ENCODE measurements at regions of chr15 and their contacts with region 1.

Region 1: DNA sequence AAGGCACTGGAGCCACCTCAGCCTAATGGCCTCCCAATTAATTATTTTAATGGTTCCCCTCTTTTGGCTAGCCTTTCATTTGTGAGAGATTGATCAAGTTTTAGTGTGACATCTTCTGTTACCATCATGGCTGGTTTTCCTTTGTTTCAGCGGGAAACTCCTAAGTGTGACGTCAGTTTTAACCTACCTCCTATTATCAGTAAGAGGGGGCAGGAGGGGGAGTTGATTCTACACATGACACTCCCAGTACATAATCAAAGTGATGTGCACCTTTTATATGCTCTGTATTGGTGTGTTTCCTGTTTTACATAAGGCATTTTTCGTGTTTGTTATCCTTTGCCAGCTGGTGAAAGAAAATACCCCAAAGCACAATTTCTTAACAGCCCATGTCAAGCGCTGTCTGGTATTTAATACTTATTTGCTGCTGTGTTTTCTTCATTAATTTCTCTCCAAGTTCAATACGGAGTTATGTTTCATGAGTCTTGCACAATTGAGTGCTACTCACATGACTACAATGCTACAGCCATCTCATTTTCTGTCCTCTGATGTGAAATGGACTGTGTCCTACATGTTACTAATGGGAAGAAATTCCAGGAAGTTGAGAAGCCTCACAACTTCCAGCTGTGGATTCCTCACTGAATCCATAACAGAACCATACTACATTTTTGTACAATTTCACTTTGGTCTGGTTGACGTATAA is 52.2 kb upstream of the POLR2M start:
- DNase-seq: no peak
- H3K4me3 ChIP-seq: no peak overlapping the region
- H3K4me3 Mint-ChIP-seq: no peak overlapping the region
- H3K27ac ChIP-seq: no peak overlapping the region
- H3K27ac Mint-ChIP-seq: no peak overlapping the region
- H3K4me1 ChIP-seq: no peaks in the 10 kb centered on the region
- H3K4me1 Mint-ChIP-seq: no peaks in the 10 kb centered on the region
- H3K27me3 ChIP-seq: no peaks in the 10 kb centered on the region
- H3K27me3 Mint-ChIP-seq: peaks cover 2 to 3% (median 3%) of the 10 kb centered on the region in 3 donors
- CTCF ChIP-seq: no peak

Region 2: GRCh38 chr15:57559875-57560274 is 94.4 kb before region 1 on chr15:
- intact Hi-C with region 1: loop called in 1 of 2 experiments (anchors 10 kb)
- DNase-seq: peak; percentile 26 to 61 (median 53)
- H3K4me3 ChIP-seq: no peak overlapping the region
- H3K4me3 Mint-ChIP-seq: no peak overlapping the region
- H3K27ac ChIP-seq: no peak overlapping the region
- H3K27ac Mint-ChIP-seq: peak overlapping the region in 2 of 7 donors; percentile 12 to 72
- H3K4me1 ChIP-seq: peaks cover 6 to 10% of the 10 kb centered on the region in 2 donors
- H3K4me1 Mint-ChIP-seq: peaks cover 26% of the 10 kb centered on the region
- H3K27me3 ChIP-seq: peaks cover 0 to 4% of the 10 kb centered on the region in 2 donors
- H3K27me3 Mint-ChIP-seq: peaks cover 5 to 27% (median 11%) of the 10 kb centered on the region in 3 donors
- CTCF ChIP-seq: peak; percentile 96

Region 3: GRCh38 chr15:58019503-58020376 is 365.4 kb after region 1 on chr15:
- intact Hi-C with region 1: no loop called
- DNase-seq: no peak
- H3K4me3 ChIP-seq: no peak overlapping the region
- H3K4me3 Mint-ChIP-seq: no peak overlapping the region
- H3K27ac ChIP-seq: no peak overlapping the region
- H3K27ac Mint-ChIP-seq: no peak overlapping the region
- H3K4me1 ChIP-seq: no peaks in the 10 kb centered on the region
- H3K4me1 Mint-ChIP-seq: no peaks in the 10 kb centered on the region
- H3K27me3 ChIP-seq: no peaks in the 10 kb centered on the region
- H3K27me3 Mint-ChIP-seq: peaks cover 0 to 3% (median 3%) of the 10 kb centered on the region in 3 donors
- CTCF ChIP-seq: no peak

Measured in CD14-positive monocyte (primary cell).